ENCODE measurements at regions of chr12 and their contacts with region 1.

Region 1: GRCh38 chr12:48851883-48852733 is at the start of gene DDX23:
- DNase-seq: peak; percentile 98
- H3K4me3 ChIP-seq: peak within 1 kb of the TSS; percentile 59 to 98 (median 93)
- H3K27ac ChIP-seq: peak within 1 kb of the TSS; percentile 59
- H3K4me1 ChIP-seq: peaks cover 18% of the 10 kb centered on the region
- H3K27me3 ChIP-seq: no peaks in the 10 kb centered on the region
- CTCF ChIP-seq: no peak
- POLR2A ChIP-seq: peak; percentile 81
- total RNA-seq, gene DDX23: 101 and 107 TPM in 2 replicates

Region 2: GRCh38 chr12:48814262-48815125 is 37.6 kb before region 1 on chr12:
- CTCF ChIA-PET with region 1: interaction called, 12 read pairs
- POLR2A ChIA-PET with region 1: no interaction called
- dilution Hi-C with region 1: no loop called
- intact Hi-C with region 1: loop called (anchors 1 kb)
- DNase-seq: peak; percentile 73
- H3K4me3 ChIP-seq: peak overlapping the region; percentile 45 to 63 (median 54)
- H3K27ac ChIP-seq: peak overlapping the region; percentile 10
- H3K4me1 ChIP-seq: peaks cover 20% of the 10 kb centered on the region
- H3K27me3 ChIP-seq: no peaks in the 10 kb centered on the region
- CTCF ChIP-seq: peak; percentile 98 to 100
- POLR2A ChIP-seq: no peak

Region 3: DNA sequence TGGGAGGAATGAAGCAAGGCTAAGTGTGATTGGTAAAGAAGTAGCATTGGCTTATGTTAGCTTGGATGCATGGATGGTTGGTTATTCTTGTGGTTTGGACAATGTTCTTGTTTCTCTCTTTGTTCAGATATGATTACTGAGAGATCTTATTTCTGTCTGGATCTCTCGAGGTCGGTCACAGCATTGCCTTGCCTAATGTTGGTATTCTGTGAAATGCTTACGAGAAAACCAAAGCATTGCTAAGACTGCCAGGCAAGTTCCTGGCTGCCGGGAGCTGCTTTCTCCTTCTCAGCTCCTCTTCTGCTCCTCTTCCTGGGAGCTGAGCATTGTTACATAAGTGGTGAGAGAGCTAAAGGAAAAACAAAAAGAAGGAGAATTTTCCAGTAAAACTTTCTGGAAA is 21.0 kb after region 1 on chr12:
- CTCF ChIA-PET with region 1: interaction called, 96 read pairs
- POLR2A ChIA-PET with region 1: no interaction called
- dilution Hi-C with region 1: no loop called
- intact Hi-C with region 1: no loop called
- DNase-seq: no peak
- H3K4me3 ChIP-seq: no peak overlapping the region
- H3K27ac ChIP-seq: no peak overlapping the region
- H3K4me1 ChIP-seq: no peaks in the 10 kb centered on the region
- H3K27me3 ChIP-seq: no peaks in the 10 kb centered on the region
- CTCF ChIP-seq: no peak
- POLR2A ChIP-seq: no peak

Region 4: DNA sequence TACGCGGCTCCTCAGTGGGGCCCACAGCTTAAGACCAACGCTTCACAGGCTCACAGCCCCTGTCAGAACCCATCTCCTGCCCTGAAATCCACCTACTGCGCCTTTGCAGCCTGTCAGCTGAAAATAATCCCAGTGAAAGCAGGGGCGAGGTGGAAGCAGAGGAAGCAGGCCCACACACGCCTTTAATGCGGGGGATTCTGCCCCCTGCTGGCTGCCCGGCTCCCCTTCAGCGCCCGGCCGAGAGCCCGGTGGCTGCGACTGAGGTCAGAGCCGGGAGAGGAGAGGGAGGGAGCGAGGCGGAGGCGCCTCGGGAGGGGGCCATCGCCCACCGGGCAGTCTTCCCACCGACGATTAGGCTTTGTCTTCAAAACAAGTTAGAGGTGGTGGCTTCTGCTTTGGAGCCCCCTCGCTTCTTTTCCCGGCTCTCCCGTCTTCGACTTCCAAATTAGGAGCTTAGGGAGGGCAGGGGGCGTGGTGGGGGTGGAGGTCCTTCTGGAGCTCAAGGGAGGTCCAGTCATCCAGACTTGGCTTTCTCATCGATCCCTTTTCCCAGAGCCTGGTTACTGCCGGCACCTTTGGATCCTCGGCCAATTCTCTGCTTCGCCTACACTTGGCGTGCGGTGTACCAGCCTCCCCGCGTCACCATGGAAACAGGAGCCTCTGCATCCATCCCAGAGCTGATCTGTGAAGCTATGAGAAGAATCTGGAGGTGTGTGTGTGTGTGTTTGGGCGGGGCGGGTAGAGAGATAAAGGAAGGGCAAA is 38.7 kb after region 1 on chr12:
- CTCF ChIA-PET with region 1: interaction called, 703 read pairs
- POLR2A ChIA-PET with region 1: interaction called, 3 read pairs
- dilution Hi-C with region 1: no loop called
- intact Hi-C with region 1: loop called (anchors 1 kb)
- DNase-seq: peak; percentile 76
- H3K4me3 ChIP-seq: no peak overlapping the region
- H3K27ac ChIP-seq: no peak overlapping the region
- H3K4me1 ChIP-seq: no peaks in the 10 kb centered on the region
- H3K27me3 ChIP-seq: peaks cover 5 to 7% of the 10 kb centered on the region in 2 experiments
- CTCF ChIP-seq: peak; percentile 95
- POLR2A ChIP-seq: no peak

Region 5: DNA sequence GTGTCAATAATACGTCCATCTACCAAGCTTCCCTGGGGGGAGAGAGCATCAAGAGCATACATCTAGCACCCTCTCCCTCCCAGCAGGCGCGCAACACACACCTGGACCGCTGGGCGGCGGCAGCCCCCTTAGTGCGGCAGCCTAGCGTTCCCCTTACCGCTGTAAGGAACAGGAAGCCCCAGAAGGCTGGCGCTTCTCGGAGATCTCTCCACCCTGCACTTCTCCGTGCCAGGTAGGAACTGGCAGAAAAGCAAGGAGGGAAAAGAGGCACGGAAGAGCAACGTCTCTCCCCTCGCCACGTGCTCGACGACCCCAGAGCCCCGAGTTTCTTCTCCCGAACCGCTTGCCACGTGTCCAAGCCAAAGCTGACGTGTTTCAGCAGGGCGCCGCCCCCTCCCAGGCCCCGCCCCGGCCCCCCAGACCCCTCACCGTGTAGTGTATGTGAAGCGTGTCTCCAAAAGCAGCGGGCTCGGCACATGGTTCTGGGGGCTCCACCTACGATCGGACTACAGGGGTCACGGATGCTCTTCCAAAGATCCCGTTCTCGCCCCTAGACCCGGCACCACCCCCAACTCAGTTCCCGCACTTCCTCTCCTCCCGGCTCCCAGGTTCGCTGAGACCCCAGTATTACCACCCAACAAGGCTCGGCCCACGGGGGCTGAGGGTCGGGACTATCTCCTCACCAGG is 72.7 kb after region 1 on chr12:
- CTCF ChIA-PET with region 1: interaction called, 16 read pairs
- POLR2A ChIA-PET with region 1: no interaction called
- dilution Hi-C with region 1: no loop called
- intact Hi-C with region 1: no loop called
- DNase-seq: peak; percentile 78
- H3K4me3 ChIP-seq: peak overlapping the region; percentile 77 to 98 (median 86)
- H3K27ac ChIP-seq: peak overlapping the region; percentile 56
- H3K4me1 ChIP-seq: peaks cover 11% of the 10 kb centered on the region
- H3K27me3 ChIP-seq: no peaks in the 10 kb centered on the region
- CTCF ChIP-seq: peak; percentile 45 to 72
- POLR2A ChIP-seq: no peak

Region 6: DNA sequence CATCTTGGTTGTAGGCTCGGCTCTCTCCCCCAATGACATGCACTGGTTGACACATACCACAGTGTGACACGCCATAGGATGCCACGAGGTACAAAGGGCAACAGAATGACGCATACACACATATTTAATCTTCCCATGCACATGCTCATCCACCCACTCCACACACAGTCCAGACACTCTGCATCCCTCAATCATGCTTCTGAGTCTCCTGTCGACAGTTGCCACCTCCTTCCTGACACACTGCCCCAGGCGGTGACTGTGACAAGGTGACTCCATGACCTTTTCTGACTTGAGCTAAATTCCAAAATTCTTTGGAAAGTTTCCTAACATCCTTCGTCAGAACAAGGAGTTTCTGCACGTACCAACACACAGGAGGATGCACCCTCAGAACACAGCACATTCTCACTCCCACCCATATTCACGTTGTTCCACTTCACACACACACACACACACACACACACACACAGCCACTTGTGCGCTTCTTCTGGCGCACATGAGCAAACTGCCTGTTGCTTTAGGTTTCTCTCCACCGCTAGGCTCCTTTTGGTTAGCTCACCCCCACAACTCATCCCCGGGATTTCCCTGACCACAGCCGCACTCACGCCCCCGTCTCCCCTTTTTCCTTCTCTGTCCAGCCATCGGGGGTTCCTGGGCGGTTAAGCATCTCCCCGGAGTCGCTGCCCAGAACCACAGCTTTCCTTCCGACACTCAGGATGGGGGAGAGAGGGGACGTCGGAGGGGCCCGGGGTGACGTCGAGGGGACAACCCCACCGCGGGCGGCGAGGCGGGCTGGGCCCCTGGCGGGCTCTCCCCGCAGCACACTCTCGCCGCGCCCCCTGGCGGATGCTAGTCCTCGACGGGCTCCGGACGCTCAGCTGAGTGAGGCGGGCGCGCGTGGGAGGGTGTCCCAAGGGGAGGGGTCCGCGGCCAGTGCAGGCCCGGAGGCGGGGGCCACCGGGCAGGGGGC is 125.5 kb after region 1 on chr12:
- CTCF ChIA-PET with region 1: interaction called, 12 read pairs
- POLR2A ChIA-PET with region 1: no interaction called
- dilution Hi-C with region 1: no loop called
- intact Hi-C with region 1: no loop called
- DNase-seq: no peak
- H3K4me3 ChIP-seq: no peak overlapping the region
- H3K27ac ChIP-seq: no peak overlapping the region
- H3K4me1 ChIP-seq: peaks cover 13% of the 10 kb centered on the region
- H3K27me3 ChIP-seq: peaks cover 63 to 66% of the 10 kb centered on the region in 2 experiments
- CTCF ChIP-seq: peak; percentile 62 to 90
- POLR2A ChIP-seq: no peak

Region 7: DNA sequence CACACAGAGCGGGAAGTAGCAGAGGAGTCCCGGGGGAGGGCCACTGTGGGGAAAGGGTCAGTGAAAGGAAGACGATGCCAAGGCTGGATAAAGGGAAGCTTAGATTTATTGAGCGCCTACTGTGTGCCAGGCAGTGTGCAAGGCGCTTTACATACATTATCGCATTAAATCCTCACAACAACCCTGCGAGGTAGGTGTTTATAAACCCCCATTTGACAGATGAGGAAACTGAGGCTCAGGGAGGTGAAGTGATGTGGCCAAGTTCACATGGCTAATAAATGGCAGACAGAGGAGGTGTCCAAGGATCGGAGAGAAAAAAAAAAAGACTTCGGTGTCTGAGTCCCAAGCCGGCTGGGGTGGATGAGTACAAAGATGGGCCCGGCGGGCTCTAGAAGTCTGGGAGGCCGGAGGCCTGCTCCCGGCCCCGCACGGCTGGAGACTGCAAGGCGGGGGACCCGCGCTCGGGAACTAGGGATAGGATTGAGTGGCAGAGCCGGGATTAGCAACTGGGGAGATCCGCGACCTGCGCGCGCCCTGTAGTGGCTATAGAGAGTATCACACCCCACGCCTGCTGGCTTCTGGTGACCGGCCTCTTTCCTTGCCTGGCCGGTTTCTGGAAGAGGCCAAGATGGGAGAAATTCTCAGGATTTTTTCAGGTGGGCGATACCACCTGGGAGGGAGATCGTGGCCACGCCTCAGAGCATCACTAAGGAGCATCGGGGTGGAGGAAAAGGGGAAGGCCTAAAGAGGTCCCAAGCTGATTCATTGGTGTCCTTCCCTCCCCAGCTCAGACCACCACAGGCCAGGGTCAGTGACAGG is 143.2 kb after region 1 on chr12:
- CTCF ChIA-PET with region 1: interaction called, 18 read pairs
- POLR2A ChIA-PET with region 1: interaction called, 3 read pairs
- dilution Hi-C with region 1: no loop called
- intact Hi-C with region 1: loop called (anchors 1 kb)
- DNase-seq: peak; percentile 77
- H3K4me3 ChIP-seq: no peak overlapping the region
- H3K27ac ChIP-seq: no peak overlapping the region
- H3K4me1 ChIP-seq: peaks cover 11% of the 10 kb centered on the region
- H3K27me3 ChIP-seq: peaks cover 25 to 26% of the 10 kb centered on the region in 2 experiments
- CTCF ChIP-seq: peak; percentile 69 to 85
- POLR2A ChIP-seq: no peak